ENCODE measurements at regions of chr5 and their contacts with region 1.

Region 1: GRCh38 chr5:145681686-145682085 is 153.5 kb downstream of the PRELID2 start:
- DNase-seq: peak; percentile 20
- H3K4me3 ChIP-seq: no peak overlapping the region
- H3K27ac ChIP-seq: no peak overlapping the region
- H3K27me3 ChIP-seq: no peaks in the 10 kb centered on the region
- CTCF ChIP-seq: peak; percentile 85

Region 2: GRCh38 chr5:145660897-145661640 is 20.6 kb before region 1 on chr5:
- CTCF ChIA-PET with region 1: interaction called, 17 read pairs
- POLR2A ChIA-PET with region 1: no interaction called
- DNase-seq: no peak
- H3K4me3 ChIP-seq: no peak overlapping the region
- H3K27ac ChIP-seq: no peak overlapping the region
- H3K27me3 ChIP-seq: no peaks in the 10 kb centered on the region
- CTCF ChIP-seq: no peak

Region 3: GRCh38 chr5:145668714-145669113 is 13.0 kb before region 1 on chr5:
- CTCF ChIA-PET with region 1: interaction called, 15 read pairs
- POLR2A ChIA-PET with region 1: interaction called, 5 read pairs
- DNase-seq: no peak
- H3K4me3 ChIP-seq: no peak overlapping the region
- H3K27ac ChIP-seq: no peak overlapping the region
- H3K27me3 ChIP-seq: no peaks in the 10 kb centered on the region
- CTCF ChIP-seq: no peak

Region 4: GRCh38 chr5:145697251-145697990 is 15.7 kb after region 1 on chr5:
- CTCF ChIA-PET with region 1: interaction called, 12 read pairs
- POLR2A ChIA-PET with region 1: no interaction called
- DNase-seq: peak; percentile 1
- H3K4me3 ChIP-seq: no peak overlapping the region
- H3K27ac ChIP-seq: no peak overlapping the region
- H3K27me3 ChIP-seq: no peaks in the 10 kb centered on the region
- CTCF ChIP-seq: peak; percentile 61

Region 5: GRCh38 chr5:146049014-146049703 is 367.5 kb after region 1 on chr5:
- CTCF ChIA-PET with region 1: interaction called, 15 read pairs
- POLR2A ChIA-PET with region 1: no interaction called
- DNase-seq: peak; percentile 65
- H3K4me3 ChIP-seq: no peak overlapping the region
- H3K27ac ChIP-seq: no peak overlapping the region
- H3K27me3 ChIP-seq: no peaks in the 10 kb centered on the region
- CTCF ChIP-seq: peak; percentile 86

Region 6: GRCh38 chr5:146399481-146399880 is 717.8 kb after region 1 on chr5:
- CTCF ChIA-PET with region 1: no interaction called
- POLR2A ChIA-PET with region 1: no interaction called
- DNase-seq: no peak
- H3K4me3 ChIP-seq: no peak overlapping the region
- H3K27ac ChIP-seq: no peak overlapping the region
- H3K27me3 ChIP-seq: peaks cover 6% of the 10 kb centered on the region
- CTCF ChIP-seq: no peak

Measured in AG04450 (cell line).